ENCODE measurements at regions of chr3 and their contacts with region 1.

Region 1: DNA sequence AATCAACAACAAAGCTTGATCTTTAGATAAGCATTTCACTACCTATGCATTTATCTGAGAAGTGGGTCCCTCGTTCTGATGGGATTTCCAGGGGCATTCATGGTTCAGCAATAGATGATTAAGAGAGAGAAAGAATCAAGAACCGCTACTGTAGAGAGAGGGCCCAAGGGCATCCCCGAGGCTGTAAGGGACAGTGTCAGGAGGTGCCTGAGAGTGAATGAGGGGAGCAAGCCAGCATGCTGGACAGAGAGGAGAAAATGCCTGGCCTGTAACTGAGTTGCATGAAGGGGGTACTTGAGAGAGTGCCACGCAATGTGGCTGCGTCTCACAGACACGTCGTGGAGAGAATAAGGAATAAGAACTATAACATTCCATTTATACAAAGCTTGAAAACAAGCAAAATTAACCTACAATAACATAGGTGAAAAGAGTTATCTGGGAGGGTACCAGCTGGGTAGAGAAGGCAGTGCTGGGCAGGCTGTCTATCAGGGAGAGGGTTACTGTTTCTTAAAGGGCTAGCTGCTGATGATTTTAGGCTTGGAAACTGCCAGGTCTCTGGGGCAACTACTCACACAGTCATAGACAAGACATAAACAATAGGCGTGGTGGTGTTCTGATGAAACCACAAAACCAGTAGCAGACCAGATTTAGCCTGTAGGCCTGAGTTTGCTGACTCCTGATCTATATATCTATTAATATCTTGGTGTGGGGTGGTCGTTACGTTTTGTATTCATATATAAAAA is 374.6 kb upstream of the CFAP20DC start:
- DNase-seq: peak in 10 of 14 experiments; percentile 5 to 83 (median 31)
- ATAC-seq: peak; percentile 65
- H3K4me3 ChIP-seq: no peak overlapping the region
- H3K4me3 Mint-ChIP-seq: peak overlapping the region; percentile 54
- H3K27ac ChIP-seq: no peak overlapping the region
- H3K27ac Mint-ChIP-seq: peak overlapping the region; percentile 93
- H3K4me1 ChIP-seq: peaks cover 44% of the 10 kb centered on the region
- H3K4me1 Mint-ChIP-seq: peaks cover 65% of the 10 kb centered on the region
- H3K27me3 ChIP-seq: no peaks in the 10 kb centered on the region
- H3K27me3 Mint-ChIP-seq: no peaks in the 10 kb centered on the region
- CTCF ChIP-seq: no peak

Region 2: DNA sequence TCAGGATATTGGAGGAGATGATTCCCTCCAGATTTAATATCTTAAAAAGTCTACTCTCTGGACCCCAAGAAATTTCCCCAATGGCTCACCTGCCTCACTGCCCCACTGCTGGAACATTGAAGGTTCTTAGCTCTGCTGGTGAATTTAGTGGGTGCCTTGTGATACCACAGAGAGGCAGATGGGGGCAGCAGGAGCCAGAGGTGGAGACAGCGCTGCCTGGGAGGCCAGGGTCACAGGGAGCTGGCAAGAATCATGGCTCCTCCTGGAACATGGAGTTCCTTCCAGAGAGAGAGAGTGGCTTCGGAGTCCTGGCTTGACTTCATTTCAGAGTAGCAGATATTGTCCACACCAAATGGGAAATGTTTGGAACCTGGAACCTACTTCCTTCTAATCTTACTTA is 111.1 kb before region 1 on chr3:
- CTCF ChIA-PET with region 1: no interaction called
- POLR2A ChIA-PET with region 1: interaction called, 6 read pairs
- intact Hi-C with region 1: loop called in 1 of 2 experiments (anchors 10 kb)
- DNase-seq: peak in 8 of 14 experiments; percentile 2 to 51 (median 28)
- ATAC-seq: peak; percentile 62
- H3K4me3 ChIP-seq: no peak overlapping the region
- H3K4me3 Mint-ChIP-seq: no peak overlapping the region
- H3K27ac ChIP-seq: no peak overlapping the region
- H3K27ac Mint-ChIP-seq: no peak overlapping the region
- H3K4me1 ChIP-seq: no peaks in the 10 kb centered on the region
- H3K4me1 Mint-ChIP-seq: peaks cover 11% of the 10 kb centered on the region
- H3K27me3 ChIP-seq: no peaks in the 10 kb centered on the region
- H3K27me3 Mint-ChIP-seq: no peaks in the 10 kb centered on the region
- CTCF ChIP-seq: peak; percentile 46

Region 3: DNA sequence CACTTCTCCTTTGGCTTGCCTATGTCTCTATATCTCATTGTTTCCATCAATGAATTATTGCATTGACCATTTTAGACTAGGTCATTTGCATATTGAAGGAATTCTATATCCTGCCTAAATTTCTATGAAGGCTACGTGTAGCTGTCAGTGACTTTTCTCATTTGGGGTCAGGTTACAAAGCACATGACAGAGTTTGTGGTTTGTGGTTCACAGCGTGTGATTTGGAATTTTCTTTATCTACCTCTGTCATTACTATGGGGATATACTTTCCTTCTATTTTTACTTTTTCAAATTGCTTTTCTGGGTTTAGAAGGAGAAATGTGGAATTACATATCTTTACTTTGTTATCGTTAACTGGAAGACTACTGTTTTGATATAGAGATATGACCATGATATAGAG is 57.3 kb before region 1 on chr3:
- CTCF ChIA-PET with region 1: no interaction called
- POLR2A ChIA-PET with region 1: no interaction called
- intact Hi-C with region 1: no loop called
- DNase-seq: no peak
- ATAC-seq: no peak
- H3K4me3 ChIP-seq: no peak overlapping the region
- H3K4me3 Mint-ChIP-seq: no peak overlapping the region
- H3K27ac ChIP-seq: no peak overlapping the region
- H3K27ac Mint-ChIP-seq: no peak overlapping the region
- H3K4me1 ChIP-seq: no peaks in the 10 kb centered on the region
- H3K4me1 Mint-ChIP-seq: peaks cover 16% of the 10 kb centered on the region
- H3K27me3 ChIP-seq: no peaks in the 10 kb centered on the region
- H3K27me3 Mint-ChIP-seq: no peaks in the 10 kb centered on the region
- CTCF ChIP-seq: no peak

Region 4: DNA sequence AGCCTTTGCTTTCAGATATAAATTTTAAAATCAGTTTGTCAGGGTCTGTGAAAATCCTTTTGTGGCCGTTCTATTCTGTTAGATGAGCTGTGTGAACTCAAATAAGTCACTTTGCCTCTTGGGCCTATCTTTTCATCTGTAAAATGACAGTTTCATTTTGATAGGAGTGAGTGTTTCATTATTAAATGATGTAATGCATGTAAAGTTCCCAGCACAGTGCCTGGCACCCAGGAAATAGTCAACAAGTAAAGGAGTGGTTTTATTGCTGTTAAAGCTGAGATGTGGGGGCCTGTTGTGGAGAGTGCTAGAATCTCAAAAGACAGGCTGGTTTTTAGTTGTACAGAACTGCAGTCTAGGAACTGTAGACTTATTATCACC is 19.8 kb after region 1 on chr3:
- CTCF ChIA-PET with region 1: interaction called, 3 read pairs
- POLR2A ChIA-PET with region 1: interaction called, 40 read pairs
- intact Hi-C with region 1: no loop called
- DNase-seq: peak in 4 of 14 experiments; percentile 30 to 78 (median 34)
- ATAC-seq: peak; percentile 69
- H3K4me3 ChIP-seq: peak overlapping the region; percentile 20
- H3K4me3 Mint-ChIP-seq: peak overlapping the region; percentile 76
- H3K27ac ChIP-seq: peak overlapping the region; percentile 13 to 59
- H3K27ac Mint-ChIP-seq: peak overlapping the region; percentile 96
- H3K4me1 ChIP-seq: peaks cover 35% of the 10 kb centered on the region
- H3K4me1 Mint-ChIP-seq: peaks cover 75% of the 10 kb centered on the region
- H3K27me3 ChIP-seq: no peaks in the 10 kb centered on the region
- H3K27me3 Mint-ChIP-seq: no peaks in the 10 kb centered on the region
- CTCF ChIP-seq: no peak

Region 5: DNA sequence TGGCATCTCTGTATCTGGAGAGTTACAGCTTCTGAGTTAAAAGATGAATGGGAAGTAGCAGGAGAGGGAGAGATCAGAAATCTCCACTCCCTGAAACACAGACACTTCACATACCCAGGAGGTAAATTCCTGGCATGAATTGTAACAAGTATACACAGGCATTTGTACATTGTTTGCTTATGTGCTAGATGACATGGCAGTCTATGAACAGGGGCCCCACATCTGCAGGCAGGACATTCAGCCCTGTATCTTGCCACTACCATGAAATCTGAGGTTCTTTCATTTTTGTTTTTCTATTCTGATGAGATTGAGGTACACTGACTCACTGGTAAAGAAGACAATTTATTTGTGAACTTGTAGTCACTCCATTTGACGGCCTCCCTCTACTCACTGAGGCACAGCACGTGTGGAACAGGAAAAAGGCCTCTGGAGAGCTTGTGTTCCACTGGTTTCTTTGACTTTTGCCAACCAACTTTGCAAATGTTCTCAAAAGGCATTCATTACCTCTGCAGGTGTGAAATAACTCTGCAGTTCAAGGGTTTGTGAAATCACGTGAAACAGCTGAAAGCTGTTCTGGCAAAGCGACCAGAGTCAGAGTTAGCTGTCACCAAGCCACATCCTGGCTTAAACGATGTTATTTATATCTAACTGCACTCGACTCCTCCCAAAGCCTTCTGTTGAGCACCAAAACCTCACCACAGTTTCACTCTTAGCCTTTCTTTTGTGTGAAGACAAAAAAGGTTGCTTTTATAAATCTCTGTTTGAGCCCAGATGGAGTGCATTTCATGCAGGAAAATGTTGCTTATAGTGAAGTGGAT is 26.7 kb after region 1 on chr3:
- CTCF ChIA-PET with region 1: interaction called, 4 read pairs
- POLR2A ChIA-PET with region 1: interaction called, 40 read pairs
- intact Hi-C with region 1: loop called in 1 of 2 experiments (anchors 1 kb)
- DNase-seq: peak; percentile 20 to 94 (median 50)
- ATAC-seq: peak; percentile 91
- H3K4me3 ChIP-seq: peak overlapping the region; percentile 0
- H3K4me3 Mint-ChIP-seq: peak overlapping the region; percentile 38
- H3K27ac ChIP-seq: peak overlapping the region; percentile 61 to 91
- H3K27ac Mint-ChIP-seq: peak overlapping the region; percentile 96
- H3K4me1 ChIP-seq: peaks cover 57% of the 10 kb centered on the region
- H3K4me1 Mint-ChIP-seq: peaks cover 86% of the 10 kb centered on the region
- H3K27me3 ChIP-seq: no peaks in the 10 kb centered on the region
- H3K27me3 Mint-ChIP-seq: no peaks in the 10 kb centered on the region
- CTCF ChIP-seq: no peak

Region 6: DNA sequence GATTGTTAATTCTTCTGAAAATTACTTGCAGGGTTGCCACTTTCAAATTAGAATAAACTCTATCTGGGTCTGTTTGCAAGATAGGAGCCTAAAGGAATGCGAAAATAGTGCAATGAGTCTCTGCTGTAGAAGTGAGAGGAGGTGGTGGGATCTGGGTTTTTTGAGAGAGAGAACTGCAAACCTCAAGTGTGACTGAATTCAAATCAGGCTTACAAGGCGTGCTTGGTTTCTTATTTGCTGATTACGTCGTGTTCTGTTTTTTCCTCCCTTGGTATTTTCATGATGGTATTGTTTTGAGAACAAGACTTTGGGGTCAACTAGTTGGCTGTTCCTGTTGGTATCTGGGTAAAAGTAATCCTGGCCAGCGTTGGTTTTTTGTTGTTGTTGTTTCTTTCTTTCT is 116.3 kb after region 1 on chr3:
- CTCF ChIA-PET with region 1: no interaction called
- POLR2A ChIA-PET with region 1: interaction called, 9 read pairs
- intact Hi-C with region 1: loop called in 1 of 2 experiments (anchors 10 kb)
- DNase-seq: peak in 1 of 14 experiments; percentile 5
- ATAC-seq: no peak
- H3K4me3 ChIP-seq: no peak overlapping the region
- H3K4me3 Mint-ChIP-seq: no peak overlapping the region
- H3K27ac ChIP-seq: no peak overlapping the region
- H3K27ac Mint-ChIP-seq: no peak overlapping the region
- H3K4me1 ChIP-seq: peaks cover 9% of the 10 kb centered on the region
- H3K4me1 Mint-ChIP-seq: peaks cover 51% of the 10 kb centered on the region
- H3K27me3 ChIP-seq: no peaks in the 10 kb centered on the region
- H3K27me3 Mint-ChIP-seq: no peaks in the 10 kb centered on the region
- CTCF ChIP-seq: no peak

Measured in CD4-positive, alpha-beta T cell (primary cell).